ENCODE measurements at regions of chr10 and their contacts with region 1.

Region 1: GRCh38 chr10:74011770-74012169 is 13.9 kb downstream of the VCL start:
- DNase-seq: peak in 2 of 3 donors; percentile 40 to 49
- H3K4me3 ChIP-seq: peak overlapping the region in 2 of 7 experiments; percentile 2 to 22
- H3K27ac ChIP-seq: peak overlapping the region; percentile 12 to 62
- H3K4me1 ChIP-seq: peaks cover 33 to 67% (median 42%) of the 10 kb centered on the region in 4 experiments
- H3K27me3 ChIP-seq: no peaks in the 10 kb centered on the region

Region 2: DNA sequence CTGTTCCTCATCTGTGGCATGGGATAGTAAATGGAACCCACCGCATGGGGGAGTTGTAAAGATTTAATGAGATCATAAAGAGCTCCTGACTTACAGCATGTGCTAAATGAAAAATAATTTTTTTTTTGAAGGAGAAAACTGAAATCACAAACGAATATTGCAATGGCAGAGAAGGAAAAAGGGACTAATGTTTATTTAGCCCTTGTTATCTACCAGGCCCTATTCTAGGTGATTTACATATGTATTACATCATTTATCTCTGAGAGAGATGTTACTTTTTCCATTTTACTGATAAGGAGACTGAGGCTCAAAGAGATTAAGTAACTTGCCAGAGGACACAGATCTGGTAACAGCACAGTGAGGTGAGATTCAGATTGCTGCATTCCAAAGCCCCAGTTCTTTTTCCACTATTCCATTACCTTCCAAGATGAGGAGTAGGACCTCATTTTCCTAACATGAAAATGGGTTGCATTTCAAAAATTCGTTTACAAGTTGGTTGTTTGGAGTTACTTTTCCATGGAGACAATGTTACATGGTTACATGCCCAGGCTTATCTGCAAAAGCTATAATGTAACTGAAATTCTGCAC is 14.8 kb after region 1 on chr10:
- CTCF ChIA-PET with region 1: interaction called, 11 read pairs
- POLR2A ChIA-PET with region 1: interaction called, 4 read pairs
- DNase-seq: no peak
- H3K4me3 ChIP-seq: no peak overlapping the region
- H3K27ac ChIP-seq: no peak overlapping the region
- H3K4me1 ChIP-seq: peaks cover 2 to 32% (median 18%) of the 10 kb centered on the region in 4 experiments
- H3K27me3 ChIP-seq: no peaks in the 10 kb centered on the region

Region 3: GRCh38 chr10:74040200-74041126 is 28.7 kb after region 1 on chr10:
- CTCF ChIA-PET with region 1: no interaction called
- POLR2A ChIA-PET with region 1: no interaction called
- DNase-seq: no peak
- H3K4me3 ChIP-seq: no peak overlapping the region
- H3K27ac ChIP-seq: no peak overlapping the region
- H3K4me1 ChIP-seq: peaks cover 7 to 25% (median 16%) of the 10 kb centered on the region in 4 experiments
- H3K27me3 ChIP-seq: no peaks in the 10 kb centered on the region

Measured in common myeloid progenitor, CD34-positive (primary cell).